CD8-positive, alpha-beta T cell (primary cell): ENCODE measurements at regions of chr21 and their contacts with region 1.

Region 1: GRCh38 chr21:17819114-17819876 is at the start of gene C21orf91:
- DNase-seq: peak; percentile 72 to 94 (median 89)
- ATAC-seq: peak; percentile 85
- H3K4me3 ChIP-seq: peak within 1 kb of the TSS; percentile 76 to 95
- H3K4me3 Mint-ChIP-seq: peak within 1 kb of the TSS; percentile 98
- H3K27ac ChIP-seq: peak within 1 kb of the TSS; percentile 91 to 92
- H3K27ac Mint-ChIP-seq: peak within 1 kb of the TSS; percentile 100
- H3K4me1 ChIP-seq: peaks cover 27% of the 10 kb centered on the region
- H3K4me1 Mint-ChIP-seq: peaks cover 53% of the 10 kb centered on the region
- H3K27me3 ChIP-seq: no peaks in the 10 kb centered on the region
- H3K27me3 Mint-ChIP-seq: no peaks in the 10 kb centered on the region
- CTCF ChIP-seq: no peak
- total RNA-seq, gene C21orf91: 37.0 to 43.6 TPM

Region 2: GRCh38 chr21:16363518-16363917 is 1455.8 kb before region 1 on chr21:
- CTCF ChIA-PET with region 1: no interaction called
- POLR2A ChIA-PET with region 1: no interaction called
- intact Hi-C with region 1: no loop called
- DNase-seq: no peak
- ATAC-seq: no peak
- H3K4me3 ChIP-seq: no peak overlapping the region
- H3K4me3 Mint-ChIP-seq: no peak overlapping the region
- H3K27ac ChIP-seq: no peak overlapping the region
- H3K27ac Mint-ChIP-seq: no peak overlapping the region
- H3K4me1 ChIP-seq: no peaks in the 10 kb centered on the region
- H3K4me1 Mint-ChIP-seq: no peaks in the 10 kb centered on the region
- H3K27me3 ChIP-seq: no peaks in the 10 kb centered on the region
- H3K27me3 Mint-ChIP-seq: no peaks in the 10 kb centered on the region
- CTCF ChIP-seq: no peak

Region 3: GRCh38 chr21:17611414-17612022 is 207.8 kb before region 1 on chr21:
- CTCF ChIA-PET with region 1: no interaction called
- POLR2A ChIA-PET with region 1: interaction called, 7 read pairs
- intact Hi-C with region 1: loop called (anchors 1 kb)
- DNase-seq: peak; percentile 52 to 92 (median 78)
- ATAC-seq: peak; percentile 69
- H3K4me3 ChIP-seq: peak overlapping the region; percentile 78 to 92
- H3K4me3 Mint-ChIP-seq: peak overlapping the region; percentile 91
- H3K27ac ChIP-seq: peak overlapping the region; percentile 67 to 79
- H3K27ac Mint-ChIP-seq: peak overlapping the region; percentile 96
- H3K4me1 ChIP-seq: peaks cover 12% of the 10 kb centered on the region
- H3K4me1 Mint-ChIP-seq: peaks cover 26% of the 10 kb centered on the region
- H3K27me3 ChIP-seq: no peaks in the 10 kb centered on the region
- H3K27me3 Mint-ChIP-seq: no peaks in the 10 kb centered on the region
- CTCF ChIP-seq: no peak

Region 4: GRCh38 chr21:17768840-17769446 is 50.4 kb before region 1 on chr21:
- CTCF ChIA-PET with region 1: no interaction called
- POLR2A ChIA-PET with region 1: no interaction called
- intact Hi-C with region 1: no loop called
- DNase-seq: no peak
- ATAC-seq: no peak
- H3K4me3 ChIP-seq: no peak overlapping the region
- H3K4me3 Mint-ChIP-seq: no peak overlapping the region
- H3K27ac ChIP-seq: no peak overlapping the region
- H3K27ac Mint-ChIP-seq: no peak overlapping the region
- H3K4me1 ChIP-seq: no peaks in the 10 kb centered on the region
- H3K4me1 Mint-ChIP-seq: no peaks in the 10 kb centered on the region
- H3K27me3 ChIP-seq: no peaks in the 10 kb centered on the region
- H3K27me3 Mint-ChIP-seq: no peaks in the 10 kb centered on the region
- CTCF ChIP-seq: no peak

Region 5: DNA sequence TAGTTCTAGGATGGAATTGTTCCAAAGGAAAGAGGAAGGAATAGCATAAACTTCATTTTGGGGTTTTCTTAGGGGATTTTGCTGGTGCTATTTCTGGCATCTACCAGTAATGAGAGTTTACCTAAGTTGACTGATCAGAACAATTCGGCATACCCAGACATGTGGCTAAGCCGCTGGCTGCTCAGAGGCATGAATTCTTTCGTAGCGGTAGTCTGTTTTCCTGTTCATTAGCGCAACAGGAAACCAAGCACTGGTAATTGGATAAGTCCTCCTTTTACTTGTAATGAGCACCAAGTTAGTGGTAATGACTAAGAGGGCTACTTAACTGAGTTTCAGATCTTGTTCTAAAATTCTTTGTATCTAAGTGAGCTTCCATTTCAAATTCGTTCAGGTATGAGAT is 38.8 kb before region 1 on chr21:
- CTCF ChIA-PET with region 1: interaction called, 9 read pairs
- POLR2A ChIA-PET with region 1: interaction called, 42 read pairs
- intact Hi-C with region 1: loop called (anchors 1 to 5 kb)
- DNase-seq: peak in 7 of 9 experiments; percentile 27 to 89 (median 59)
- ATAC-seq: peak; percentile 59
- H3K4me3 ChIP-seq: no peak overlapping the region
- H3K4me3 Mint-ChIP-seq: peak overlapping the region; percentile 67
- H3K27ac ChIP-seq: peak overlapping the region in 1 of 2 experiments; percentile 73
- H3K27ac Mint-ChIP-seq: peak overlapping the region; percentile 93
- H3K4me1 ChIP-seq: peaks cover 73% of the 10 kb centered on the region
- H3K4me1 Mint-ChIP-seq: peaks cover 87% of the 10 kb centered on the region
- H3K27me3 ChIP-seq: no peaks in the 10 kb centered on the region
- H3K27me3 Mint-ChIP-seq: no peaks in the 10 kb centered on the region
- CTCF ChIP-seq: no peak

Region 6: GRCh38 chr21:17798796-17799195 is 20.5 kb before region 1 on chr21:
- CTCF ChIA-PET with region 1: interaction called, 5 read pairs
- POLR2A ChIA-PET with region 1: interaction called, 10 read pairs
- intact Hi-C with region 1: loop called (anchors 2 kb)
- DNase-seq: no peak
- ATAC-seq: no peak
- H3K4me3 ChIP-seq: no peak overlapping the region
- H3K4me3 Mint-ChIP-seq: no peak overlapping the region
- H3K27ac ChIP-seq: peak overlapping the region in 1 of 2 experiments; percentile 58
- H3K27ac Mint-ChIP-seq: peak overlapping the region; percentile 76
- H3K4me1 ChIP-seq: peaks cover 37% of the 10 kb centered on the region
- H3K4me1 Mint-ChIP-seq: peaks cover 63% of the 10 kb centered on the region
- H3K27me3 ChIP-seq: no peaks in the 10 kb centered on the region
- H3K27me3 Mint-ChIP-seq: no peaks in the 10 kb centered on the region
- CTCF ChIP-seq: no peak

Region 7: GRCh38 chr21:17903029-17903806 is 83.9 kb after region 1 on chr21:
- CTCF ChIA-PET with region 1: no interaction called
- POLR2A ChIA-PET with region 1: no interaction called
- intact Hi-C with region 1: loop called (anchors 2 to 5 kb)
- DNase-seq: peak in 2 of 9 experiments; percentile 57 to 66
- ATAC-seq: peak; percentile 56
- H3K4me3 ChIP-seq: no peak overlapping the region
- H3K4me3 Mint-ChIP-seq: no peak overlapping the region
- H3K27ac ChIP-seq: no peak overlapping the region
- H3K27ac Mint-ChIP-seq: no peak overlapping the region
- H3K4me1 ChIP-seq: no peaks in the 10 kb centered on the region
- H3K4me1 Mint-ChIP-seq: peaks cover 4% of the 10 kb centered on the region
- H3K27me3 ChIP-seq: no peaks in the 10 kb centered on the region
- H3K27me3 Mint-ChIP-seq: no peaks in the 10 kb centered on the region
- CTCF ChIP-seq: peak; percentile 60